Esophagus muscularis mucosa (tissue), 4 donors: ENCODE measurements at regions of chr10 and their contacts with region 1.

Region 1: DNA sequence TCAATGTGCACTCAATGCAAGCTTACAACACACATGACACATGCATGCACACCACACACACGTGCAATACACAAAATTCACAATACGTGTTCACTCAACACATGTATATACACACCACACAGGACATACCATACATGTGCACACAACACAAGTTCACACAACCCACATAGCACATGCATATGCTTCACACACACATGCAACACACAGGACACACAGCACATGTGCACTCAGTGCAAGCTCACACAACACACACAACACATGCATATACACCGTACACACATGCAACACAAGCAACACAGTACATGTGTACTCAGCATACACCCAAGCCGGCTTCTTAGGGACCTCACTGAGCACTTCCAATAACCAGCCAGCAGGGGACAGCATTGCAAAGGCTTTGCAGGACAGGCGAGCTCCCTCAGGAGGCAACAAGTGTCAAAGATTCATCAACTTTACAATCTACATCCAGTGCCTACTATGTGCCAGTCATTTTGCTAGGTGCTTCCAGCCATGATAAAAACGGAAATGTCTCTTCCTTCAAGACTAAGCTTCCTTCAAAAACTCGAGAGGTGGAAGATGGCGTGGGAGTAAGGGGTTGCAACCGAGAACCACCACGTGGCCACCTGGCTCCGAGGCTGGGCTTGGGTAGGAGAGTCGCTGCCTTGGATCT is 61.1 kb downstream of the JCAD start:
- DNase-seq: no peak
- H3K4me3 ChIP-seq: no peak overlapping the region
- H3K27ac ChIP-seq: no peak overlapping the region
- H3K4me1 ChIP-seq: peaks cover 26 to 79% (median 68%) of the 10 kb centered on the region in 4 donors
- H3K27me3 ChIP-seq: no peaks in the 10 kb centered on the region
- CTCF ChIP-seq: peak; percentile 95 to 98 (median 96)
- EP300 ChIP-seq: no peak
- POLR2A ChIP-seq: no peak

Region 2: GRCh38 chr10:29857843-29858701 is 140.2 kb before region 1 on chr10:
- intact Hi-C with region 1: loop called (anchors 10 kb)
- DNase-seq: no peak
- H3K4me3 ChIP-seq: peak overlapping the region in 2 of 4 donors; percentile 4 to 30
- H3K27ac ChIP-seq: peak overlapping the region; percentile 69 to 81 (median 71)
- H3K4me1 ChIP-seq: peaks cover 6 to 41% (median 38%) of the 10 kb centered on the region in 4 donors
- H3K27me3 ChIP-seq: no peaks in the 10 kb centered on the region
- CTCF ChIP-seq: peak; percentile 75 to 87 (median 81)
- EP300 ChIP-seq: no peak
- POLR2A ChIP-seq: no peak

Region 3: GRCh38 chr10:30247704-30248103 is 249.4 kb after region 1 on chr10:
- intact Hi-C with region 1: loop called (anchors 10 kb)
- DNase-seq: no peak
- H3K4me3 ChIP-seq: no peak overlapping the region
- H3K27ac ChIP-seq: no peak overlapping the region
- H3K4me1 ChIP-seq: no peaks in the 10 kb centered on the region
- H3K27me3 ChIP-seq: no peaks in the 10 kb centered on the region
- CTCF ChIP-seq: no peak
- EP300 ChIP-seq: no peak
- POLR2A ChIP-seq: no peak